ENCODE measurements at regions of chr17 and their contacts with region 1.

Region 1: GRCh38 chr17:39461113-39461925 is at the start of gene CDK12:
- DNase-seq: peak; percentile 94
- H3K4me3 Mint-ChIP-seq: peak within 1 kb of the TSS; percentile 96
- H3K27ac Mint-ChIP-seq: peak within 1 kb of the TSS; percentile 99
- H3K4me1 Mint-ChIP-seq: peaks cover 17% of the 10 kb centered on the region
- H3K27me3 Mint-ChIP-seq: no peaks in the 10 kb centered on the region
- total RNA-seq, gene CDK12: 83.9 TPM in 2 replicates

Region 2: DNA sequence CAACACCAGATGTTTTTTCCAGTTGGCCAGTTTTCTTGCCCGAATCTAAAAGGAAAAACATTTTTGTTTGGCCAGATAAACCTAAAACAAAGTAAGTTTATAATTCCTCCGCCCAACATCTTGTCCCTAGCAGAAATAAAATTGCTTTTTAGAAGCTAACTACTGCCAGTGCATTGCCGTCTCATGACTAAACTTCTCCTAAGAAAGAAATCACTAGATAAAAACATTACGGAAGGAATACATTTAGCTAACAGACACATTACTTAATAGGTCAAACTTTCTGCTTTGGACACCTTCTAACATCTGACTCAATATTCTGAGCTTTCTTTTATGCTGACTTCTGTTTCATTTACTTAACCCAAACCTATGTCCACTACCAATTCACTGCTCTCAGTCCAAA is 96.1 kb before region 1 on chr17:
- intact Hi-C with region 1: no loop called
- DNase-seq: no peak
- H3K4me3 Mint-ChIP-seq: no peak overlapping the region
- H3K27ac Mint-ChIP-seq: no peak overlapping the region
- H3K4me1 Mint-ChIP-seq: no peaks in the 10 kb centered on the region
- H3K27me3 Mint-ChIP-seq: no peaks in the 10 kb centered on the region

Region 3: DNA sequence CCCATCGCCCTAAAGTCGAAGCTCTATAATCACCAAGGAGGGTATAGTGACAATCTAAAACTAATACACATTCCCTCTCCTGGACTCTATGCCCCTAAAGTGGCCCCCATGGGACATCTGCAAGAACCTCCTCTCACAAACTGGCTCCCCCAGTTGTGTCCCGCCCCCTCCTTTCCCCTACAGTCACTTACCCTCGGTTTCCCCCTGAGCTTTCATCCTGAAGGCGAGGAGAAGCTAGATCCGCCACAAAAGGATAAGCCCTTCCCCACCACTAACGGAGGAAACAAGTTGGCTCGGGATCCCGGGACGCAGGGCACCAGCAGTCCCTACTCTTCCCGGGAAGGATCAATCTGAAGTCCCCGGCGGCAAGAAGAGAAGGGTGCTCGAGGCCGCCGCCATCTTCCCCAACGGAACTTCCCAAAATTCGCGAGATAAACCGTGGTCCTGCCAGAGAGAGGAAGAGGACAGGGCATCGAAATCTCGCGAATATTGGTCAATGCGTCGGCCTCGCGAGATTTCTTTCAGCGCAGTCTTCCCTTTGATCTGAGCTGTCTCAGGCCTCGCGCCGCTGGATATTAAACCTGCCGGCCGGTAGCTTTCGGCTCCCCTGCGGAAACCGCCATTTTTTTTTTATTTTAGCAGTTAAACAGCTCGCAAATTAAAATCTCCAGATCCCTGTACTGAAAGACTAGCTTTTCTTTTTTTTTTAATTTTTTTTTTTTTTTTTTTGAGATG is 10.3 kb before region 1 on chr17 and contains the start of gene MED1:
- intact Hi-C with region 1: loop called (anchors 1 kb)
- DNase-seq: peak; percentile 92
- H3K4me3 Mint-ChIP-seq: peak within 1 kb of the TSS; percentile 97
- H3K27ac Mint-ChIP-seq: peak within 1 kb of the TSS; percentile 96
- H3K4me1 Mint-ChIP-seq: peaks cover 14% of the 10 kb centered on the region
- H3K27me3 Mint-ChIP-seq: no peaks in the 10 kb centered on the region
- total RNA-seq, gene MED1: 63.7 and 64.1 TPM in 2 replicates